ENCODE measurements at regions of chr17 and their contacts with region 1.

Region 1: DNA sequence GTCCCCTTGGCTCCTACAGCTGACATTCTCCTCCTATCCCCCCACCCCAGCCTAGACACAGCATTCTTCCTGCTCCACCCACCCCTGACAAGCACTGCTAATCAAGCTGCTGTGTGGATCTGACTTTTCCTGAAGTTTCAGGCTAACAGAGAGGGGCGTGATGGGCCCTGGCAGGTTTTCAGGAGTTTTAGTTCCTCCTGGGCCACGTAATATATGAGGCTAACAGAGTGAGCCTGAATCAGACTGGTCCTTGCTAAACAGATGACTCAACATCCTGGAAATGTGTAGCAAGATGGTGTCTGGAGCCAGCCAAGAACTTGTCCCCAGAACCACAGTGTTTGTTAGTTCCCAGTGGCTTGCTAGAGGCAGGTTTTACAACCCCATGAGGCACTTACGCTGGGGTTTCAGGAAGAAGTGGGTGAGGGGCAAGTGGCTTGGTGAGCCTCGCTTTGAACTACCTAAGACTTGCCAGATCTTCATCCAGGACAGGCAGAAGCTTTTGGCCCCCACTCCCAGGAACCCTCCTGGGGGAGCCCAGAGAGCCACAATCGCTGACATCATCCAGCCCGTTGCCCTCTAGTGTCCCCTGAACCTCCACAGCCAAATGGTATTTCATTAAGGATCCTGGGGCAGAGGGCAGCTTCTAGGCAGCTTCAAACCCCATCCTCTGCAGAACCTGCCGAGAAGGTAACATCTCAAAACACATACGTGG is 15.9 kb downstream of the TMEM92 start:
- DNase-seq: peak; percentile 70 to 98
- H3K4me3 ChIP-seq: peak overlapping the region; percentile 52
- H3K27ac ChIP-seq: peak overlapping the region; percentile 92
- H3K4me1 ChIP-seq: peaks cover 44% of the 10 kb centered on the region
- H3K27me3 ChIP-seq: no peaks in the 10 kb centered on the region
- CTCF ChIP-seq: 0 out of 2 replicates have a peak, but pooled peaks have one; percentile 14

Region 2: DNA sequence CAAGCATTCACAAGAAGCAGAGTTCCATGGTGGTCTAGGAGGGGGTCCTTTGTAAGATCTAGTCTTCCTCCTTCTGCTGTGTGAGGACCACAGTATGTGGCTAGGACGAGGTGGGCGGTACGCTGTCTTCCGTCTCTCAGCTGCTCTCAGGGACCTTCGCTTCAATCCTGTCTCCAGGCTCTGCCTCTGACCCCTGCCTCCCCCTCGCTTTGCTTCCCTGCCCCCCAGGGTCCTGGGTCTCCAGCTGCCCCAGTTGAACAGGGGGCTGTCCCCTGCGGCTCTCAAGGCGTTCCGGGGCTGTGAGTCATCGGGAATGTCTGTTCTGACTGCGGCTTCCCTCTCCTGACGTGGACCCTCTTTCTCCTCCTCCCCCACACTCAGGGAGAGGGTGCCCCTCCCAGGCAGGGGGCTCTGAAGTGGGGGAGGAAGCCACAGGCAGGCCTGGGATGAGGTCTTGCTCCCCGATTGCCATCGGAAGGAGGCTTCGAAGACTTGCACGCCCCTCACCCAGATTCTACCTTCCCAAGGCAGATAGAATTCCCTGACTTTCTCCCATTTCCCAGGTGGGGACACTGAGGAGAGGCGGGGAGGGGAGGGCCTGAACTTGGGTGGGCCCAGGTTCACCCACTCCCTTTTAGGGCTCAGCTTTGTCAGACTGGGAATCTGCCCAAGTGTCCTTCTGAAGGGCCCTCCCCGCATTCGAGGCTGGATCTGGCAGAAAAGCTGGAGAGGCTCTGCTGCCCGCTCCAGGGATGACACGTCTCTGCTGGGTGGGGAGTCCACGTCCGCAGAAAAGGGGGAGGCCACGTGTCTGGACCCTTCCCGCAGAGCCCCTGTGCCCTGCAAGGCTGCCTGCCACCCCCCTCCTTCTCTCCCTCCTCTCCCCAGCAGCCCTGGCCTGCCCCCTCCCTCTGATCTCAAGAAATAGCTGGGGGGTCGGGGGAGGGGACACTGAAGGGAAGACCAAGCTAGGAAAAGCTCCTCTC is 79.6 kb before region 1 on chr17:
- CTCF ChIA-PET with region 1: interaction called, 15 read pairs
- POLR2A ChIA-PET with region 1: no interaction called
- intact Hi-C with region 1: no loop called
- DNase-seq: peak in 1 of 2 experiments; percentile 48
- H3K4me3 ChIP-seq: no peak overlapping the region
- H3K27ac ChIP-seq: no peak overlapping the region
- H3K4me1 ChIP-seq: peaks cover 12% of the 10 kb centered on the region
- H3K27me3 ChIP-seq: peaks cover 28% of the 10 kb centered on the region
- CTCF ChIP-seq: no peak

Region 3: DNA sequence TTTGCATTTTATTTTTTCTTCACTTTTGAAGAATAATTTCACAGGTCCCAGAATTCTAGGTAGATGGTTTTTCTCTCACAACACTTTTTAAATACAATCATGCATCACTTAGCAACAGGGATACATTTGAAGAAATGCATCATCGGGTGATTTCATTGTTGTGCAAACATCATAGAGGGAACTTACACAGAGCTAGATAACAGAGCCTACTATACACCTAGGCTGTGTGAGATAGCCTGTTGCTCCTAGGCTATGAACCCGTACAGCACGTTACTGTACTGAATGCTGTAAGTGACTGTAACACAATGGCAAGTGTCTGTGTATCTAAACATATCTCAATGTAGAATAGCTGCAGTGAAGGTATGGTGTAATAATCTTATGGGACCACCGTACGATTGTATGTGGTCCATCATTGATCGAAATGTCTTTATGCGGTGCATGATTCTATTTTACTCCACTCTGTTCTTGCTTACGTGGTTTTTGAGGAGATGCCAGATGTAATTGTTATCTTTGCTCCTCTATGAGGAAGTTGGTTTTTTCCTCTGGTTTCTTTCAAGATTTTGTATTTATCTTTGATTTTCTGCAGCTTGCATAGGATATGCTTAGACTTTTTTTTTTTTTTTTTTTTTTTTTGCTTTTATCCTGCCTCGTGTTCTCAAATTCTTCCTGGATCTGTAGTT is 51.4 kb before region 1 on chr17:
- CTCF ChIA-PET with region 1: no interaction called
- POLR2A ChIA-PET with region 1: no interaction called
- intact Hi-C with region 1: no loop called
- DNase-seq: peak in 1 of 2 experiments; percentile 57
- H3K4me3 ChIP-seq: no peak overlapping the region
- H3K27ac ChIP-seq: no peak overlapping the region
- H3K4me1 ChIP-seq: no peaks in the 10 kb centered on the region
- H3K27me3 ChIP-seq: peaks cover 21% of the 10 kb centered on the region
- CTCF ChIP-seq: no peak

Region 4: DNA sequence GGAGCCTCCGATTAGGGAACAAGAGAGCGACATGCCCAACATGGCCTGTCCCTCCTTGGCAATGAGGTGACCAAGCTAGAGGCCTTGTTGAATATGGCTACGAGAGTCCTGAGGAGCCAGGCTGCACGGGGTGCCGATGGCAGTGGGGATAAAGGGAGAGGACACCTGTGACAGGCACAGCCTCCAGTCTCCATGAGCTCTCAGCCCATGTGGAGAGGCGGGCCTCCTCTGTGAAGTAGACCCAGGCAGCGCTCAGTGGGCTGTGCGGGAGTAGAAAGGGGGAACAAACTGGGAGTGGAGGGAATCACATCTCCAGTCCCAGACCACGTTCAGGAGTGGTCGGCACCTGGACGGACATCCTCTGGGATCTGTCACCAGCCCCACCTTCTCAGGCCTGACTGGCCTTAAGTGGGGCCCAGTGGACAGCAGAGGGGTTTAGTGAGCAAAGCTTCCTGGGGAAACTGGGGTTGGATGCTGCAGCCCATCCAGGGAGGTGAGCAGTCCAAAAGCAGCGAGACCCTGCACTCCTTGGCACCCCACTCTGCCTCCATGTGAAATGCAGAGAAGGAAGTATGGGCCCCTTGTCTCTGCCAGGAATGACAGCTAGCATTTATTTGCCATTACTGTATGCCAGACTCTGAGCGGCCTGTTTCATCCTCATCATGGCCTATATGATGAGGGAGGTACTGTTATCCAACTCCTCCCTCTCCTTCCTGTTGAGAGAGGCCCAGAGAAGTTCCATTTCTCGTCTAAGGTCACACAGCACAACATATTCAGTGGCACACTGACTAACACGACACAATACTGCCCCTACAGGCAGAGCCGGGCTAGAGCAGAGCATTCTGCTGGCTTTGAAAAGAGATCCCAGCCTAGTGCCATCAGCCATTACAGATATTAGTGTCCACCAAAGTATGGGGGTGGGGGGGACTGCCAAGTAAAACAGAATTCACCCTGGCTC is 20.4 kb before region 1 on chr17:
- CTCF ChIA-PET with region 1: interaction called, 11 read pairs
- POLR2A ChIA-PET with region 1: interaction called, 3 read pairs
- intact Hi-C with region 1: loop called (anchors 2 kb)
- DNase-seq: peak; percentile 46 to 59
- H3K4me3 ChIP-seq: no peak overlapping the region
- H3K27ac ChIP-seq: no peak overlapping the region
- H3K4me1 ChIP-seq: peaks cover 22% of the 10 kb centered on the region
- H3K27me3 ChIP-seq: no peaks in the 10 kb centered on the region; the same call in 1 of the 2 replicates
- CTCF ChIP-seq: peak; percentile 92

Region 5: GRCh38 chr17:50279181-50279526 is 11.0 kb before region 1 on chr17:
- CTCF ChIA-PET with region 1: interaction called, 4 read pairs
- POLR2A ChIA-PET with region 1: interaction called, 11 read pairs
- intact Hi-C with region 1: loop called (anchors 2 kb)
- DNase-seq: peak; percentile 72 to 76
- H3K4me3 ChIP-seq: no peak overlapping the region
- H3K27ac ChIP-seq: peak overlapping the region; percentile 11; the same call in 1 of the 2 replicates
- H3K4me1 ChIP-seq: peaks cover 58% of the 10 kb centered on the region
- H3K27me3 ChIP-seq: no peaks in the 10 kb centered on the region
- CTCF ChIP-seq: no peak

Region 6: GRCh38 chr17:50304781-50305404 is 14.7 kb after region 1 on chr17:
- CTCF ChIA-PET with region 1: no interaction called
- POLR2A ChIA-PET with region 1: interaction called, 10 read pairs
- intact Hi-C with region 1: no loop called
- DNase-seq: no peak
- H3K4me3 ChIP-seq: no peak overlapping the region
- H3K27ac ChIP-seq: no peak overlapping the region
- H3K4me1 ChIP-seq: no peaks in the 10 kb centered on the region
- H3K27me3 ChIP-seq: no peaks in the 10 kb centered on the region
- CTCF ChIP-seq: no peak

Measured in PC-9 (cell line).